ENCODE measurements at regions of chr1 and their contacts with region 1.

Region 1: GRCh38 chr1:162040681-162041080 is 17.0 kb upstream of the OLFML2B start:
- DNase-seq: no peak
- ATAC-seq: no peak

Region 2: DNA sequence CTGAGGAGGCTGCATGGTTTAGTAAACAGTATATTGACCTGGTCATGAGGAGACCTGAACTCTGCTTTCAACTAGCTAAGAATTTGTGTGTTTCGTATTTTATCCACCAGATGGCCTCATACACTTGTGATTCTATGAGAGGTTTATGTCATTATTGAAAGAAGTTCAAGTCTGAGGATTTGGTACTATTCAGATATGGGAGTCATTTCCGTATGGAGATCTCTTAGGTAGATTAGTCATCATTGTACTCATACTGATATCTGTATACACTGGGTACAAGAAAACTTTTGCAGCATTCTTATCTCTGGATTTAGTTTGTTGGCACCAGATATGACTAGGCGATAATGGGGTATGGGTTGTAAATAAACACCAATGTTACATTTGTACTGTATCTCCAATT is 247.9 kb before region 1 on chr1:
- intact Hi-C with region 1: loop called (anchors 1 kb)
- DNase-seq: no peak
- ATAC-seq: no peak